ENCODE measurements at regions of chr16 and their contacts with region 1.

Region 1: DNA sequence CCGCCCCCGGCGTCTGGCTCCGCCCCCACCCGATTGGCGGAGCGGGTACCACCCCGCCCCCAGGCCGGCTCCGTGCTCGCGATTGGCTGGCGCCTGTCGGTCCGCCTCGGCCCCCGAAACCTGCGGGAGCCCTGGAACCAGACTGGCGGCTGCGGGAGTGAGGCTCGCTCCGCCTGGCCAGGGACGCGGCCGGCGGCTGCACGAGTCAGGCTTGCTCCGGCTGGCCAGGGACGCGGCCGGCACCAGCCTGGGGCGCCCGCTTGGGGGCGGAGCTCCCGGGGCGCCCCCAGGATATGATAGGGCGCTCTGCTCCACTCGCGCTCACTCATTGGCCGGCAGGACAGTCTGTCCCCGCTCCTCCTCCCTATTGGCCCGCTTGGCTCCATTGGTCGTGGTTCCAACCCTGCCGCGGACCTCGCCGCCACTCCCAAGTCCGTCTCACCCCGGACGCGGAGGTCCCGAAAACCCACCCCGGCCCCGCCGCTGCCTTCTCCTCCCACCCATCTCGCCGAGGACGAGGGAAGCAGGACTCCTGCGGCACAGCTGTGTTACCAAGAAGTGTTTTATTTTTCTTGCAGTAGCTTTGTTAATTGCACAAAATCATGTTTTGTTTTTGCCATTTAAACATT is 340 bp upstream of the ROGDI start:
- H3K4me3 ChIP-seq: peak overlapping the region; percentile 80
- H3K27ac ChIP-seq: peak overlapping the region; percentile 69
- H3K4me1 ChIP-seq: peaks cover 3% of the 10 kb centered on the region; the same call in 1 of the 2 replicates
- CTCF ChIP-seq: no peak

Region 2: DNA sequence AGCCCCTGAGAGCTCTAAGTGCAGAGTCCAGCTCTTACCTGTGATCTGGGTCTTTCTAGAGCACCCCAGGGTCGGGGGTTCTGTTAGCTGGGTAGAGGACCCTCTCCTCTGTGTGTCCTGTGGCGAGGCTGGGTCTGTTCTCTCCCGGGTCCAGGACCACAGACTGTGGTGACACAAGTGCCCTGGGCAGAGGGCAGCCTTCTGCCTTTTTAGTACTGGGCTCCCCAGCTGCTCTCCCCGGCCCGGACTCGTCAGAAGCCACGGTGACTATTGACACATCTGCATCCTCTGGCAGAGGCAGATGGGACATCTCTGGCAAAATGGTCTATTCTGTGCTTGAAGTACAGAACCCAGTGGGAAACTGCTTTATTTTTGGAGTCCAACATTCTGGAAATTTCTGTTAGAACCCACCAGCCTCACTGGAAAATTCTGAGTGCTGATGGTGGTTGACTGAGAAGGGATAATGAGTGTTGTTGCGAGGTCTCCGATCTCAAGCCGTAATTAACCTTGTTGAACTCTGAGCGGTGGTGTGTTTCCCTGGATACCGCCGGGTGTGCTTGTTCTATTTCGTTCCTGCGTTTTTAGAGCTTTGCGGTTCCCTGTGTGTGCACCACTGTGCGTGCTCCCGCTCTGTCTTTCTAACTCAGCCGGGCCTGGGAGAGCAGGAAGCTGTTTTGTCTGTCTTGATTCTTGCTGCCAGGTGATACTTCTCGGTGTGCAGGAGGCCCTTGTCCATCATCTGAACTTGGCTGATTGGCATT is 135.4 kb before region 1 on chr16:
- CTCF ChIA-PET with region 1: no interaction called
- POLR2A ChIA-PET with region 1: interaction called, 10 read pairs
- H3K4me3 ChIP-seq: no peak overlapping the region
- H3K27ac ChIP-seq: no peak overlapping the region
- H3K4me1 ChIP-seq: no peaks in the 10 kb centered on the region
- CTCF ChIP-seq: no peak

Region 3: GRCh38 chr16:4787627-4788482 is 14.9 kb before region 1 on chr16 and contains the start of gene SEPTIN12:
- CTCF ChIA-PET with region 1: no interaction called
- POLR2A ChIA-PET with region 1: interaction called, 19 read pairs
- H3K4me3 ChIP-seq: no peak within 1 kb of the TSS
- H3K27ac ChIP-seq: no peak within 1 kb of the TSS
- H3K4me1 ChIP-seq: no peaks in the 10 kb centered on the region
- CTCF ChIP-seq: peak; percentile 58

Measured in HEK293 (cell line).